HepG2 (cell line): ENCODE measurements at regions of chr18 and their contacts with region 1.

Region 1: DNA sequence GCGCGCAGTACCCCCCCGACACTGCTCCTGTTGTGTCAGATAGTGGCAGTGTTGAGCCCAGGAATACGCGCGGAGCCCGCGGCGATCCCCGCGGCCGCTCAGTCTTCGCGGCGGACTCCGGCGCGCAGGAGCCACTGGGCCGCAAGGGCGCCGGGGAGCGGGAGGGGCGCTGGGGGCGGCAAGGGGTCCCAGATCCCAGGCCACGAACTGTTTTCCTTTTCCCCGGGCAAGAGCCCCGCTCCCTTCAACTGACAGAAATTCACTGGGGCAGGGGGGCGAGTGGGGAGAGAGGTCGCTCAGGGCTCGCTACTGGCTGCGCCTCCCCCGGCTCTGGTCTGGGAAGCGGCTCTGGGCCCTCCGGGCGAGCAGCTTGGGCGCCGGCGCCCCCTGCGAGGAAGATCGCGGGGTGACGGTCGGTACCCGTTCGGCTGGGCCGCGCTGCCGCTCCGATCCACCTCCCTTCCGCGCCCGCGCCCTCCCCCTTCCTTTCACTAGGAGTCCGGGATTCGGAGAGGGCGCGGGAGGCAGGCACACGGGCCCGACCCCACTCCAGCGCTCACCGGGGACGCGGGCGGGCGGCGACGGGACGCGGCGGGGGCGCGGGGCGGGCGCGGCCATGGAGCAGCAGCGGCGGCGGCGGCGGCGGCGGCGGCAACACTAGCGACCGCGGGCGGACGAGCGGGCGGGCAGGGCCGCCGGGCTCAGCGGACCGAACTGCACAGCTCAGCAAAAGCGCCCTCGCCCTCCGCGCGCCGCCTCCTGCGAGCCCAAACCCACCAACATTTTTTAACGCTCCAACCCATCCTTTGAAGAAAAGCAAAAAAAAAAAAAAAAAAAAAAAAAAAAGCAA is 1.4 kb upstream of the SETBP1 start:
- DNase-seq: peak; percentile 42
- ATAC-seq: peak; percentile 97
- H3K4me3 ChIP-seq: peak overlapping the region; percentile 48 to 70 (median 60); a peak in 4 of 6 replicates
- H3K27ac ChIP-seq: no peak overlapping the region
- H3K4me1 ChIP-seq: no peaks in the 10 kb centered on the region
- H3K27me3 ChIP-seq: peaks cover 3 to 39% of the 10 kb centered on the region in 2 experiments; a peak in 4 of 5 replicates
- CTCF ChIP-seq: peak; percentile 76
- EP300 ChIP-seq: no peak
- POLR2A ChIP-seq: no peak
- RAD21 ChIP-seq: peak; percentile 72

Region 2: DNA sequence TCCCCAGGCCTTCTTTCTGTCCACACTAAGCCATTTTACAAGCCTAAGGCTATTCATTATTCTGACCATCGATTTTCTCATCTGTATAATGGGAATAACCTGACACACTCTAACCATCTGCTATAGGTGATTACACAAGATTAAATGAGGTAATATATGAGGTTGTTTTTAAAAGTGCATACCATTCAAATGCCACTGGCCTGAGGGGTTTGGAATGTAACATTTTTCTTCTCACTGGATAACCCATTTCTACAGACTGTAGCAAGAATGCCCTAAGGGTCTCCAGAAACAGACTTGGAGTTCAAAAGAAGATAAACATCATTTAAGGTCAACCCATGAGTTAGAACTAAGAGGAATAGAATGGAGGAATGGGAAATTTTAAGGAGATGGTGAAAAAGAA is 110.3 kb before region 1 on chr18:
- CTCF ChIA-PET with region 1: no interaction called
- POLR2A ChIA-PET with region 1: no interaction called
- in situ Hi-C with region 1: no loop called
- intact Hi-C with region 1: no loop called
- DNase-seq: no peak
- ATAC-seq: no peak
- H3K4me3 ChIP-seq: no peak overlapping the region
- H3K27ac ChIP-seq: no peak overlapping the region
- H3K4me1 ChIP-seq: no peaks in the 10 kb centered on the region
- H3K27me3 ChIP-seq: no peaks in the 10 kb centered on the region
- CTCF ChIP-seq: no peak
- EP300 ChIP-seq: no peak
- POLR2A ChIP-seq: no peak
- RAD21 ChIP-seq: no peak

Region 3: GRCh38 chr18:44799907-44800421 is 120.7 kb after region 1 on chr18:
- CTCF ChIA-PET with region 1: no interaction called
- POLR2A ChIA-PET with region 1: no interaction called
- in situ Hi-C with region 1: loop called (anchors 25 kb)
- intact Hi-C with region 1: no loop called
- DNase-seq: no peak
- ATAC-seq: no peak
- H3K4me3 ChIP-seq: no peak overlapping the region
- H3K27ac ChIP-seq: no peak overlapping the region
- H3K4me1 ChIP-seq: peaks cover 52% of the 10 kb centered on the region
- H3K27me3 ChIP-seq: no peaks in the 10 kb centered on the region
- CTCF ChIP-seq: no peak
- EP300 ChIP-seq: no peak
- POLR2A ChIP-seq: no peak
- RAD21 ChIP-seq: no peak

Region 4: DNA sequence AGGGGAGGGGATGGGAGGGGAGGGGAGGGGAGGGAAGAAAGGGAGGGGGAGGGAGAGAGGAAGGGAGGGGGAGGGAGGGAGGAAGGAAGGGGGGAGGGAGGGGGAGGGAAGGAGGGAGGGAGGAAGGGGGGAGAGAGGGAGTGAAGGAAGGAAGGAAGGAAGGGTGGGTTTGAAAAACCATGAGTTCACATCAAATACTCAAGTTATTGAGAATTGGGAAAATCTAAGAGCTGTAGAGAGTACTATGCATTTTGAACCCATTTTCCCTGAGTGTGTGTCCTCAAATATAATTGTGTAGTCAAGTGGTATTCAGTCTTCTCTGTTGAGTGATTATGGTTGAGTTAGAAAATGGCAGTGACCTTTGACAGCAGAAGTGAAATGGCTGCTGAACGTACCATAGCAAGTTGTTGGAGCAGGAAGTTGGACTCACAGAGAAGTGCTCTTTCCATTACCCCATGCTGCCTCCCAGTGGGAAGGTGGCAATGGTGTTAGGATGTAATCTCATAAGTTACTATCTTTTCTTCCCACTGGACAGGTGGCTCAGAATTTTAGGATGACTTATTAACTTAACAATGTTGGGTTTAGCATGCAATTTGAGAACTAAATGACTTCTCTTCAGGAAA is 216.0 kb after region 1 on chr18:
- CTCF ChIA-PET with region 1: no interaction called
- POLR2A ChIA-PET with region 1: no interaction called
- in situ Hi-C with region 1: no loop called
- intact Hi-C with region 1: loop called (anchors 1 kb)
- DNase-seq: no peak
- ATAC-seq: peak; percentile 29; the same call in 1 of the 3 replicates
- H3K4me3 ChIP-seq: no peak overlapping the region
- H3K27ac ChIP-seq: no peak overlapping the region
- H3K4me1 ChIP-seq: no peaks in the 10 kb centered on the region
- H3K27me3 ChIP-seq: no peaks in the 10 kb centered on the region
- CTCF ChIP-seq: peak; percentile 52
- EP300 ChIP-seq: no peak
- POLR2A ChIP-seq: no peak
- RAD21 ChIP-seq: no peak

Region 5: DNA sequence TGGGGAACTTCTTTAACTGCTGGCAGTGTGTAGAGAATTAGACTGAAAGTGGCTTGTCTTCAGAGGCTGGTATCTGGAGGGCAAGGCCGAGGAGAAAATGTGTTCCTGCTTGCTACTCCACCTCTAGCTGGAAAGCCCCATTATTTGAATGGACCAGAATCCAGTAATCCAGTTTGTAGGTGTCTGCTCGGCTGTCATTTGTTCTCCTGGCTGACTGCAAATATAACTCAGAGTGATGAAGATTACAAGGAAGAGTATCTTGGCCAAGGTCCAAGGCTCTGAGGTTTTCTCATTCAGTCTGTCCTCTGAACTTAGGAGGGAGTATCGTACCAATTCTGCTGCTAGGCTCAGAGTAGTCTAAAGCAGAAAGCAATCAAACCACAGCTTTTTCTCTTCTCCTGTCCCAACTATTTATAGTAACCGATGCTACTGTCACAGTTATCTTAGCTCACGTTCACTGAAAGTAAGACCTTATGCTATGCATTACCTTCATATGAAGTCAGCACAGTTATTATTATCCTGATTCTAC is 230.0 kb after region 1 on chr18:
- CTCF ChIA-PET with region 1: no interaction called
- POLR2A ChIA-PET with region 1: no interaction called
- in situ Hi-C with region 1: no loop called
- intact Hi-C with region 1: no loop called
- DNase-seq: no peak
- ATAC-seq: no peak
- H3K4me3 ChIP-seq: no peak overlapping the region
- H3K27ac ChIP-seq: no peak overlapping the region
- H3K4me1 ChIP-seq: no peaks in the 10 kb centered on the region
- H3K27me3 ChIP-seq: no peaks in the 10 kb centered on the region
- CTCF ChIP-seq: no peak
- EP300 ChIP-seq: no peak
- POLR2A ChIP-seq: no peak
- RAD21 ChIP-seq: no peak

Region 6: GRCh38 chr18:45212181-45213039 is 533.1 kb after region 1 on chr18:
- CTCF ChIA-PET with region 1: interaction called, 12 read pairs
- POLR2A ChIA-PET with region 1: no interaction called
- in situ Hi-C with region 1: loop called (anchors 25 kb)
- intact Hi-C with region 1: no loop called
- DNase-seq: peak; percentile 59
- ATAC-seq: peak; percentile 100
- H3K4me3 ChIP-seq: no peak overlapping the region
- H3K27ac ChIP-seq: no peak overlapping the region
- H3K4me1 ChIP-seq: no peaks in the 10 kb centered on the region
- H3K27me3 ChIP-seq: no peaks in the 10 kb centered on the region; a peak in 1 of 5 replicates
- CTCF ChIP-seq: peak; percentile 90
- EP300 ChIP-seq: no peak
- POLR2A ChIP-seq: no peak
- RAD21 ChIP-seq: peak; percentile 68